Transverse colon (tissue), 4 donors: ENCODE measurements at regions of chr1 and their contacts with region 1.

Region 1: GRCh38 chr1:58397187-58397820 is 149.2 kb downstream of the OMA1 start:
- DNase-seq: no peak
- H3K4me3 ChIP-seq: no peak overlapping the region
- H3K27ac ChIP-seq: no peak overlapping the region
- H3K4me1 ChIP-seq: peaks cover 0 to 3% (median 0%) of the 10 kb centered on the region in 4 donors
- H3K27me3 ChIP-seq: no peaks in the 10 kb centered on the region
- CTCF ChIP-seq: no peak
- EP300 ChIP-seq: no peak
- POLR2A ChIP-seq: no peak

Region 2: DNA sequence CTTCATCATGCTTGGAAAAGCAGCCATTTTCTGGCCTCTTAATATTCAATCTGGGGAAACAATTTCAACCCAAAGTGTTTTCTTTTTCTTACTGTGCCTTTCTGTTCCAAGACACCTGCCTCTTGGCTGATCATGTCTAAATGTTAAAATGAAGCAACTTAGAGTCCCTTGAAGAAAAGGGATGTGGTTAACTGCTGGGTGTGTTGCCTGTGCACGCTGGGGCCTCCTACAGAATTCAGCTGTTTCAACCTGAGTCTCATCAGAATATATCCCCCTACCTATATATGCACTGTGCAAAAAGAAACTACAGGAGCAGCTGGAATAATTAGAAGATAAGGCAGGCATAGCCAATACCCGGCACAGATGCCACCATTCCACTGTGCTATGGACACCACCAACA is 72.7 kb before region 1 on chr1:
- in situ Hi-C with region 1: no loop called
- intact Hi-C with region 1: loop called (anchors 2 kb)
- DNase-seq: no peak
- H3K4me3 ChIP-seq: no peak overlapping the region
- H3K27ac ChIP-seq: no peak overlapping the region
- H3K4me1 ChIP-seq: no peaks in the 10 kb centered on the region
- H3K27me3 ChIP-seq: no peaks in the 10 kb centered on the region
- CTCF ChIP-seq: no peak
- EP300 ChIP-seq: no peak
- POLR2A ChIP-seq: no peak